Calu3 (cell line): ENCODE measurements at regions of chr12 and their contacts with region 1.

Region 1: DNA sequence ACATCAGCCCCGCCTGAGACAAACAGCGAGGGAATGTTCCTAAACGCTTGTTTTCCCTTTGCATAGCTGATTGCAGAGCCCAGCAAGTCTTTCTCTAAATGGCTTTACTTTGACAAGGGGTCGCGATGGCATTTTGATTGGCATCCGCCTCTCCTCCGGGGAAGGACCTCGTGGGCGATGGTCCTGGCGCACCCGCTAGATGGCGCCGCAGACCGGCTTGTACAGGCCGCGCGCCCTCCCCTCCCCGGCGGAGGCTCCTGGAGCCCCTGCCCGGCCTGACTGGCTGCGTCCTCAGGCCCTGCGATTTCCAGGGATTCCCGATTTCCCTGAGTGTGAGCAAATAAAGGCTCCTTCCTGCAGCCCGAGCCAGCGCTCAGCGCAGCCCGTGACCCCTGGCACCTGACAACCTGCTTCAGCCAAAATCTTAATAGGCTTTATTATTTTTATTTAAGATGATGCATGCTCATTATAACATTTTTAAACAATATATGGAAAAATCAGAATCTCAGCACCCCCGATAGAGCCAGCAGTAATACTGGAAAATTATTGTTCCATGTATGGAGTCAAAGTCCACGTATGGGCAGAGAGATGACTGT is 468.3 kb downstream of the AACS start:
- DNase-seq: peak; percentile 86
- H3K4me3 Mint-ChIP-seq: no peak overlapping the region
- H3K27ac Mint-ChIP-seq: no peak overlapping the region
- H3K4me1 Mint-ChIP-seq: no peaks in the 10 kb centered on the region
- H3K27me3 Mint-ChIP-seq: peaks cover 31% of the 10 kb centered on the region
- CTCF ChIP-seq: peak; percentile 92

Region 2: GRCh38 chr12:126051611-126052107 is 518.1 kb after region 1 on chr12:
- CTCF ChIA-PET with region 1: no interaction called
- intact Hi-C with region 1: loop called (anchors 1 kb)
- DNase-seq: peak; percentile 74
- H3K4me3 Mint-ChIP-seq: peak overlapping the region; percentile 75
- H3K27ac Mint-ChIP-seq: peak overlapping the region; percentile 91
- H3K4me1 Mint-ChIP-seq: peaks cover 67% of the 10 kb centered on the region
- H3K27me3 Mint-ChIP-seq: no peaks in the 10 kb centered on the region
- CTCF ChIP-seq: peak; percentile 41

Region 3: GRCh38 chr12:126617312-126617711 is 1083.8 kb after region 1 on chr12:
- CTCF ChIA-PET with region 1: no interaction called
- intact Hi-C with region 1: loop called (anchors 1 kb)
- DNase-seq: peak; percentile 67
- H3K4me3 Mint-ChIP-seq: no peak overlapping the region
- H3K27ac Mint-ChIP-seq: no peak overlapping the region
- H3K4me1 Mint-ChIP-seq: no peaks in the 10 kb centered on the region
- H3K27me3 Mint-ChIP-seq: no peaks in the 10 kb centered on the region
- CTCF ChIP-seq: peak; percentile 68

Region 4: GRCh38 chr12:126747530-126748149 is 1214.1 kb after region 1 on chr12:
- CTCF ChIA-PET with region 1: no interaction called
- intact Hi-C with region 1: loop called (anchors 5 kb)
- DNase-seq: peak; percentile 78
- H3K4me3 Mint-ChIP-seq: no peak overlapping the region
- H3K27ac Mint-ChIP-seq: no peak overlapping the region
- H3K4me1 Mint-ChIP-seq: no peaks in the 10 kb centered on the region
- H3K27me3 Mint-ChIP-seq: no peaks in the 10 kb centered on the region
- CTCF ChIP-seq: peak; percentile 95